ENCODE measurements at regions of chr17 and their contacts with region 1.

Region 1: DNA sequence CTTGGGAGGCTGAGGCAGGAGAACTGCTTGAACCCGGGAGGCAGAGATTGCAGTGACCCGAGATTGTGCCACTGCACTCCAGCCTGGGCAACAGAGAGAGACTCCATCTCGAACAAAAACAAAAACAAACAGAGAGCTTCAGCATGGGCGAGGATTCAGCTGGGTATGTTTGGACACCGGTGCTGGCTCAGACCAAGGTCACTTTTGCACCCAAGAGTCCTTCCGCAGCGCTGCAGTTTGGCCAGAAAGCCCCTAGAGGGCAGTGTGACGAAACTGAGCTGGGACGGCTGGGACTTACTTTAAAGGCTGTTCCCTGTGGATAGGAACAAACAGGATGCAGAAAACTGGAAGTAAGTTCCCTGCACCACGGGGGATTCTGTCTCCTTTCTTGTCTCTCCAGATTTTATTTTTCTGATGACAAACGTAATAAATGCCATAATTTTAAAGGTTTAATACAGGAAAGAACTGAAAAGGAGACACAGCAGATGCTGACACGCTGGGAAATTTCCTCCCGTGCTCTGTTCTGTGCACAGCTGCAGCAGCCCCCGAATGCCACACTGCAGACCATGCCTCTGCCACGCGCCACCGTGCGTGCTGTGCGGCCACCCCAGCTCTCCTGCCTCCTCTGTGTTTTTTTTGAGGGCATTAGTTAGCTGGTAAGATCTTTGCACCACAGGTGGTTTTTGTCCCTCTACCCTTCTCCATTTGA is 25.2 kb upstream of the USP36 start:
- DNase-seq: peak in 4 of 5 donors; percentile 40 to 61 (median 52)
- H3K4me3 ChIP-seq: no peak overlapping the region
- H3K4me3 Mint-ChIP-seq: peak overlapping the region in 1 of 8 donors; percentile 10
- H3K27ac ChIP-seq: no peak overlapping the region
- H3K27ac Mint-ChIP-seq: peak overlapping the region in 1 of 7 donors; percentile 37
- H3K4me1 ChIP-seq: no peaks in the 10 kb centered on the region
- H3K4me1 Mint-ChIP-seq: peaks cover 0 to 3% (median 1%) of the 10 kb centered on the region in 4 donors
- H3K27me3 ChIP-seq: no peaks in the 10 kb centered on the region
- H3K27me3 Mint-ChIP-seq: peaks cover 7 to 8% of the 10 kb centered on the region in 2 donors

Region 2: DNA sequence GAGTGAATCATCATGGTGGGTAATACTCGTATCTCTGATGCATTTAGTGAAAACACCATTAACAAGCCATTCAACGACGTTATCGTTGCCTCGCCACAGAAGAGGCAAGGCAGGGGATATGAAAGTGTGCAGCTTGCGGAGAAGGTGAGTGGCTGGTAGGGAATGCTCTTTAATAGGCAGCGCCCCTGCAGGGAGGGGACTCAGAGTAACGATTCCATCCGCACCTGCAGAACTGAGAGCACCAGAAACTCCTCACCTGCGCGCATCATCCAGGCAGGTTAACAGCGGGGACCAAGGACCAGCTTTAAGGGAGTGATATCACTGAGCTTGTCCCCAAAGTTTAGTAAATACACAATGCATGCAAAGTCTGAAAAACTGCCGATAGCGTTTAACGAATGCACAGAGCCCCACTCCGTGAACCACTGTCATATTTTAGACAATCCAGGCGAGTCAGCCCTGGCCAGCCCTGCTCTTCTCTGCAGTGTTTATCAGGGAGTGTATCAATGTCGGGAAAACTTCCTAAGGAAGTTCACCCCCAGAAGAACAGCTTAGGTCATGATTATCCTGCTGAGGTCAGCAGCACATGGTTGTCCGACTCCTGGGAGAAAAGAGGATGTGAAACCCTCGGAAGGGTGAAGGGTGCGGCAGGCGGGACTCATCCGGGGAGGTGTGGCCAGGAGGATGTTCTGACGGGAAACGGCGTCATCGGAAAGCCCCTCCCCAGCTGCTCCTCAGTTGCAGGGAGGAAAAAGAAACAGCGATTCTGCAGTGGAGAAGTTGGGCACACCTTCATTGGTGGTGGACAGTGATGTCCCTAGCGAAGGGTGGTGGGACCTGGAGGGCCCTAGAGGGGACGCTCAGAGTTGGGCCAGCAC is 220.2 kb before region 1 on chr17:
- CTCF ChIA-PET with region 1: no interaction called
- POLR2A ChIA-PET with region 1: no interaction called
- intact Hi-C with region 1: no loop called
- DNase-seq: peak; percentile 34 to 78 (median 59)
- H3K4me3 ChIP-seq: no peak overlapping the region
- H3K4me3 Mint-ChIP-seq: peak overlapping the region; percentile 59 to 90 (median 85)
- H3K27ac ChIP-seq: peak overlapping the region; percentile 3
- H3K27ac Mint-ChIP-seq: peak overlapping the region; percentile 84 to 97 (median 92)
- H3K4me1 ChIP-seq: peaks cover 13% of the 10 kb centered on the region
- H3K4me1 Mint-ChIP-seq: peaks cover 6 to 16% (median 11%) of the 10 kb centered on the region in 4 donors
- H3K27me3 ChIP-seq: no peaks in the 10 kb centered on the region
- H3K27me3 Mint-ChIP-seq: peaks cover 3 to 7% of the 10 kb centered on the region in 2 donors

Region 3: GRCh38 chr17:78890498-78890897 is 24.7 kb after region 1 on chr17:
- CTCF ChIA-PET with region 1: interaction called, 18 read pairs
- POLR2A ChIA-PET with region 1: interaction called, 3 read pairs
- intact Hi-C with region 1: no loop called
- DNase-seq: peak; percentile 60 to 71 (median 63)
- H3K4me3 ChIP-seq: no peak overlapping the region
- H3K4me3 Mint-ChIP-seq: peak overlapping the region in 5 of 8 donors; percentile 35 to 76 (median 57)
- H3K27ac ChIP-seq: no peak overlapping the region
- H3K27ac Mint-ChIP-seq: peak overlapping the region; percentile 74 to 93 (median 91)
- H3K4me1 ChIP-seq: peaks cover 27% of the 10 kb centered on the region
- H3K4me1 Mint-ChIP-seq: peaks cover 15 to 33% (median 26%) of the 10 kb centered on the region in 4 donors
- H3K27me3 ChIP-seq: no peaks in the 10 kb centered on the region
- H3K27me3 Mint-ChIP-seq: peaks cover 2 to 11% of the 10 kb centered on the region in 2 donors

Region 4: DNA sequence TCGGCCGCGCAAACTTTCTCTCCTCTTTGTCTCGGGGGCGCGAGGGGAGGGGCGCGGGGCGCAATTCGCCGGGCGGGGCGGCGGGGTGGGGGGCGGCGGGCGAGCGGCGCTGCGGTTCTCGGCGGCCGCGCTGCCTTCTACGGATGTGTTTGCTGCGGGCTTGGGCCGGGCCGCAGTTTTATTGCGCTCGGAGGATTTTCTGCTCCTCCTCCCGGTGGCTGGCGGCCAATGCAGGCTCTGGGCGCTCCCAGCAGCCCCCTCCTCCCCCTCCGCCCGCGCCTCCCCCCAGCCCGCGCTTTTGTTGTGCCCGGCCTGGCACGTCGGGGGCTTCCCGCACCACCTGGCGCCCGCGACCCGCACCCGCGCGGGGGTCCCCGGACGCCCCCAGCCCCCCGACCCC is 59.4 kb after region 1 on chr17 and contains the start of gene TIMP2:
- CTCF ChIA-PET with region 1: no interaction called
- POLR2A ChIA-PET with region 1: no interaction called
- intact Hi-C with region 1: loop called (anchors 1 kb)
- DNase-seq: peak; percentile 55 to 74 (median 65)
- H3K4me3 ChIP-seq: peak within 1 kb of the TSS in 1 of 2 donors; percentile 54
- H3K4me3 Mint-ChIP-seq: peak within 1 kb of the TSS; percentile 75 to 90 (median 82)
- H3K27ac ChIP-seq: no peak within 1 kb of the TSS
- H3K27ac Mint-ChIP-seq: no peak within 1 kb of the TSS
- H3K4me1 ChIP-seq: peaks cover 15% of the 10 kb centered on the region
- H3K4me1 Mint-ChIP-seq: peaks cover 5 to 18% (median 10%) of the 10 kb centered on the region in 4 donors
- H3K27me3 ChIP-seq: no peaks in the 10 kb centered on the region
- H3K27me3 Mint-ChIP-seq: peaks cover 7 to 13% of the 10 kb centered on the region in 2 donors
- total RNA-seq, gene TIMP2: 5.9 to 6.0 TPM

Region 5: DNA sequence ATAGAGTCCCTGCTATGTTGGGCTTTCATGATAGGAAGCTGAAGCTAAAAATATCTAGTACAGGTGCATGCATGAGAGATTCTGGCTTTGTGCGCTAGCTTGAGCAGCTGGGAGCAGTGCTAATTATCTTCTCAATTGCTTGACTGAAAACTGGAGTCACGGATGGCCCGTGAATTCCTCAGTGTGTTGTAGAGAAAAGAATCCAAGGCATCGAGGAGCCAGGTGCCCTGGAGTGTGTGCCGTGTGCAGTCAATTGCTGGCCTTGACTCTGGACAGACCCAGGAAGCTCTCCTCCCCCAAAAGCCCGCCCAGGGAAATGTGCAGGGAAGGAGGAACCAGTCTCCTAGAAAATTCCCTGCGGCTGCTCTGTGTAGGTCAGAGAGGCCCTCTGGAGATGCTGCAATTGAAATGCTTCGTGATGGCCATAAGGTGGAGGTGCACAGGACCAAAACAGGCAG is 99.7 kb after region 1 on chr17:
- CTCF ChIA-PET with region 1: interaction called, 60 read pairs
- POLR2A ChIA-PET with region 1: no interaction called
- intact Hi-C with region 1: no loop called
- DNase-seq: no peak
- H3K4me3 ChIP-seq: no peak overlapping the region
- H3K4me3 Mint-ChIP-seq: no peak overlapping the region
- H3K27ac ChIP-seq: no peak overlapping the region
- H3K27ac Mint-ChIP-seq: no peak overlapping the region
- H3K4me1 ChIP-seq: no peaks in the 10 kb centered on the region
- H3K4me1 Mint-ChIP-seq: no peaks in the 10 kb centered on the region
- H3K27me3 ChIP-seq: no peaks in the 10 kb centered on the region
- H3K27me3 Mint-ChIP-seq: no peaks in the 10 kb centered on the region

Measured in CD4-positive, alpha-beta memory T cell (primary cell).